ENCODE measurements at regions of chr1 and their contacts with region 1.

Region 1: GRCh38 chr1:50735443-50735842 is 224.6 kb downstream of the FAF1 start:
- DNase-seq: peak in 1 of 2 donors; percentile 25
- ATAC-seq: no peak
- H3K4me3 ChIP-seq: no peak overlapping the region
- H3K4me3 Mint-ChIP-seq: no peak overlapping the region
- H3K27ac ChIP-seq: no peak overlapping the region
- H3K27ac Mint-ChIP-seq: no peak overlapping the region
- H3K4me1 ChIP-seq: peaks cover 3% of the 10 kb centered on the region
- H3K4me1 Mint-ChIP-seq: peaks cover 25 to 26% of the 10 kb centered on the region in 2 donors
- H3K27me3 ChIP-seq: no peaks in the 10 kb centered on the region
- H3K27me3 Mint-ChIP-seq: no peaks in the 10 kb centered on the region
- CTCF ChIP-seq: peak; percentile 74

Region 2: GRCh38 chr1:50620680-50621329 is 114.6 kb before region 1 on chr1:
- intact Hi-C with region 1: no loop called
- DNase-seq: no peak
- ATAC-seq: no peak
- H3K4me3 ChIP-seq: no peak overlapping the region
- H3K4me3 Mint-ChIP-seq: no peak overlapping the region
- H3K27ac ChIP-seq: no peak overlapping the region
- H3K27ac Mint-ChIP-seq: no peak overlapping the region
- H3K4me1 ChIP-seq: no peaks in the 10 kb centered on the region
- H3K4me1 Mint-ChIP-seq: peaks cover 1 to 4% of the 10 kb centered on the region in 2 donors
- H3K27me3 ChIP-seq: no peaks in the 10 kb centered on the region
- H3K27me3 Mint-ChIP-seq: no peaks in the 10 kb centered on the region
- CTCF ChIP-seq: no peak

Region 3: DNA sequence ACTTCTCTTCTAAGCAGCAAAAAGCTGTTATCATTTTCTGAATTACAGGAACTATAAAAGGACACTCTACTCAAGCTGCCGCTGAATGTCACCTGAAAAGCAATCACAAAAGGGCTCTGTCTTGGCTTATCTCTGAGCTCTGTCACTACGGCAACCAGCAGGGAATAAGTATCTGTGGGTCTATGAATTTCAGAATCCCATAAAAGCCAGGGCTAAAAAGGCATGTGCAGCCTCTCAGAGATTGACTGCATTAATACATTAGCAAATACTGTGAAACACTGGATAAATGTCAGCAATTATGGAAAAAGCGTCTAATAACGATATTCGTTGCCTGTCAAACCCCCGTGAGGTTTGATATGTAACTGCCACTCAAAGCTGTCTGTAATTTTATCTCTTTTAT is 102.0 kb before region 1 on chr1:
- intact Hi-C with region 1: no loop called
- DNase-seq: no peak
- ATAC-seq: no peak
- H3K4me3 ChIP-seq: no peak overlapping the region
- H3K4me3 Mint-ChIP-seq: no peak overlapping the region
- H3K27ac ChIP-seq: no peak overlapping the region
- H3K27ac Mint-ChIP-seq: no peak overlapping the region
- H3K4me1 ChIP-seq: no peaks in the 10 kb centered on the region
- H3K4me1 Mint-ChIP-seq: peaks cover 0 to 8% of the 10 kb centered on the region in 2 donors
- H3K27me3 ChIP-seq: no peaks in the 10 kb centered on the region
- H3K27me3 Mint-ChIP-seq: no peaks in the 10 kb centered on the region
- CTCF ChIP-seq: no peak

Region 4: DNA sequence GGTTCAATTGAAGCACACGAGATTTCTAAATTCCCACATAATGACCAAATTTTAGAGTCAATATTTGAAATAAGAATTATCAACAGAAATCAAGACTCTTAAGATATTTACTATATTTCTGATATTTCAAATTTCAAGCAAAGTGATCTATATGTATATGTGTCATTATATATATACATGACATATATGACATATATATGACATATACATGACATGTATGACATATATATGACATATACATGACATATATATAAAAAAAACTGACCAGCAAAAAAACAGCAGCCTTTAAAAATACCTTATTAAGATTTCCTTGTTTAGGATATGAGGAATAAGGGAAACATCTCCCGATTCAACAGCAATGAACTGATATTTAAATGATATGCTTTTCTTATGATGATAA is 41.6 kb before region 1 on chr1:
- intact Hi-C with region 1: no loop called
- DNase-seq: no peak
- ATAC-seq: no peak
- H3K4me3 ChIP-seq: no peak overlapping the region
- H3K4me3 Mint-ChIP-seq: no peak overlapping the region
- H3K27ac ChIP-seq: no peak overlapping the region
- H3K27ac Mint-ChIP-seq: no peak overlapping the region
- H3K4me1 ChIP-seq: no peaks in the 10 kb centered on the region
- H3K4me1 Mint-ChIP-seq: peaks cover 5 to 10% of the 10 kb centered on the region in 2 donors
- H3K27me3 ChIP-seq: no peaks in the 10 kb centered on the region
- H3K27me3 Mint-ChIP-seq: no peaks in the 10 kb centered on the region
- CTCF ChIP-seq: no peak

Region 5: DNA sequence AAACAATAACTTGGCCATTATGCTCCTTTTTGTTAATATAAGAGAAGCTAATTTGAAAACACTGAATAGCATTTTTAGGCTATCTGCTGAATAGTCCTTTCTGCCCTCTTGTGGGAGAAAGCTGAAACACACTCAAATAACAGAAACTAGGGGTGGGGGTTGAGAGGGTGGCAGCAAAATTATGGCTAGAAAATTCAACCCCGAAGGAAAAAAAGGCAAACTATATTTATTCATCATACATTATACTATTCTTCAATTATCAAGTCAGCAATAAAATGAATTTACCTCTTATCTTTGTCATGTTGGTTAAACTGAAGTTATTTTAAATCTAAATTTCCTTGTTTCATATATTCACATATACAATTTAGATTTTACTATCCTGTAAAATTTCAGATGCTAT is 31.3 kb before region 1 on chr1:
- intact Hi-C with region 1: loop called (anchors 2 kb)
- DNase-seq: peak in 1 of 2 donors; percentile 46
- ATAC-seq: peak; percentile 54 to 71 (median 56)
- H3K4me3 ChIP-seq: no peak overlapping the region
- H3K4me3 Mint-ChIP-seq: no peak overlapping the region
- H3K27ac ChIP-seq: no peak overlapping the region
- H3K27ac Mint-ChIP-seq: no peak overlapping the region
- H3K4me1 ChIP-seq: peaks cover 10% of the 10 kb centered on the region
- H3K4me1 Mint-ChIP-seq: peaks cover 22 to 33% of the 10 kb centered on the region in 2 donors
- H3K27me3 ChIP-seq: no peaks in the 10 kb centered on the region
- H3K27me3 Mint-ChIP-seq: no peaks in the 10 kb centered on the region
- CTCF ChIP-seq: peak; percentile 72

Region 6: DNA sequence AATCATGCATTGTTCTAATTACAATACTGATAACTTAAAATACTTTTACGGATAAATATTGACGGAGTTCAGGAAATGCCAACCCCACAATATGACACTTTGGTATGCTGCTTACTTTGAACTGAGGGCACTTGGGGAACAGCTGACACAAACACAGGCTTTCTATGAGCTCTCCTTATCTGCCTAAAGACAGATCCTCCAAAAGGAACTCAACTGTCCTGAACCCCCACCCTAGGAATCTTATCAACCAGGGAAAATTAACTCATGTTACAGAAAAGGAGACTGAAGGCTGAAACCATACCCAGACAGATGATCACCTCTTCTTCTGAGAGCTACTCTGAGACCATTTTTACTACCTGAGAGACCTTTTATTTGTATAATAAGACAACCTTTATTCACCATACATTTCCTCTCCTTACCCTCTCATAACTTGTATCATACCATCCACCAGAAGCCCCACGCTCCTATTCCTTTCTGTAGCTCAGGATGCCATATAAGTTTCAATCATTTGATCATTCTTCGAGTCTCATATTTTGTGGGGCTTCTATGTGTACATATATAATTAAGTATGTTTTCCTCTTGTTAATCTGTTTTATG is 14.9 kb before region 1 on chr1:
- intact Hi-C with region 1: no loop called
- DNase-seq: no peak
- ATAC-seq: no peak
- H3K4me3 ChIP-seq: no peak overlapping the region
- H3K4me3 Mint-ChIP-seq: no peak overlapping the region
- H3K27ac ChIP-seq: no peak overlapping the region
- H3K27ac Mint-ChIP-seq: peak overlapping the region; percentile 47 to 72
- H3K4me1 ChIP-seq: peaks cover 29% of the 10 kb centered on the region
- H3K4me1 Mint-ChIP-seq: peaks cover 51 to 55% of the 10 kb centered on the region in 2 donors
- H3K27me3 ChIP-seq: no peaks in the 10 kb centered on the region
- H3K27me3 Mint-ChIP-seq: no peaks in the 10 kb centered on the region
- CTCF ChIP-seq: no peak